ENCODE measurements at regions of chr5 and their contacts with region 1.

Region 1: DNA sequence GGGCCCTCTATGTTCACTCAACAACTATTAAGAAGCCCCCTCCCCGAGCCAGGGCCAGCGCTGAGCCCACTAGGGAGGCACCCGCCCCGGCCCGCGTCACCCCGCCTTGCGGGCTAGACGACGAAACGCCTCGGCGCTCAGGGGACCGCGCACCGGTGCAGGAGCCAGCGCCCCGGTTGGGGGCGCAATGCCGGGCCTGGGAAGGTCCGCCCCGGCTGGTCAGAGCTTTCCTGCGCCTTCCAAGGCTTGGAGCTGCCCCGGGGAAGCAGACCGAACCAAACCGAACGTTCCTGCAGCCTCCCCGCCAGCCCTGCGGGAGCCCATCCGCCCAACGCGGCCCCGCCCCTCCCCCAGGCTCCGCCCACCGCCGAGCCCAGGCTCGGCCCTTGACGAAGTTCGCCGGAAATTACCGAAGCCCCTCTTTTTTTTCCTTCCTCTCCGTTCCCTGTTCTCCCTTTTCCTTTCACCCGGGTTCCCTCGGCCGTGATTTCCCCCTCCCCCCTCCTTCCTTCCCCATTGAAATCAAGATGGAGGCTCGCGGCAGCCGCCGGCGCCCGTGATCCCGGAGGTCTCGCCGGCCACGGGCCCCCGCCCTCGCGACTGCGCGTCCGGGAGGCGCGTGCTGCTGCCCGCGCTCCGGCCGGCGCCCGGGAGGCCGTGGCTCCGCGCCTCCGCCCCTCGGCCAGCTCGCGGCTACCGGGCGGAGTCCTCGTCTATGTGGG is at the start of gene TRIO:
- DNase-seq: peak; percentile 96
- H3K4me3 ChIP-seq: peak within 1 kb of the TSS; percentile 61 to 93 (median 90)
- H3K27ac ChIP-seq: peak within 1 kb of the TSS; percentile 91 to 99 (median 98)
- H3K4me1 ChIP-seq: peaks cover 0 to 41% (median 29%) of the 10 kb centered on the region in 4 donors
- H3K27me3 ChIP-seq: no peaks in the 10 kb centered on the region
- CTCF ChIP-seq: peak in 3 of 4 experiments; percentile 34 to 55 (median 35)
- EP300 ChIP-seq: no peak
- POLR2A ChIP-seq: peak; percentile 21 to 28
- total RNA-seq, gene TRIO: 119 to 300 (median 181) TPM

Region 2: DNA sequence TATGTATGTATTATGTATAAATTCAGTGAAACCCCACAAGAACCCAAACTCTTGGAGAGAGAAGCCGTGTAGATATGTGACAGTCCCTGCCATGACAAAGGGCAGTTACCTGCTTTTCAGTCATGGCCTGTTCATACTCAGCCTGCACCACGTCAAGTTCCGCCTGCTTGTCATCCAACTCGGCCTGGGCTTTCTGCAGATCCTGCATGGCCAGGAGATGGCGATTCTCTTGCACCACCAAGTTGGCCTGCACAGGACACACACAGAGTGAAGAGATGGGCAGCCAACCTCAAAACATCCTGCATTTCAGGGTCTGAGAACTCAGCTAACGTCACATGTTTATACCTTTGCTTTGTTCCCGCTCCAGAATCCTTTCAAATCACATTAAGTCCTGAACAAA is 384.3 kb before region 1 on chr5:
- intact Hi-C with region 1: no loop called
- DNase-seq: no peak
- H3K4me3 ChIP-seq: no peak overlapping the region
- H3K27ac ChIP-seq: no peak overlapping the region
- H3K4me1 ChIP-seq: no peaks in the 10 kb centered on the region
- H3K27me3 ChIP-seq: no peaks in the 10 kb centered on the region
- CTCF ChIP-seq: no peak
- EP300 ChIP-seq: no peak
- POLR2A ChIP-seq: no peak

Region 3: DNA sequence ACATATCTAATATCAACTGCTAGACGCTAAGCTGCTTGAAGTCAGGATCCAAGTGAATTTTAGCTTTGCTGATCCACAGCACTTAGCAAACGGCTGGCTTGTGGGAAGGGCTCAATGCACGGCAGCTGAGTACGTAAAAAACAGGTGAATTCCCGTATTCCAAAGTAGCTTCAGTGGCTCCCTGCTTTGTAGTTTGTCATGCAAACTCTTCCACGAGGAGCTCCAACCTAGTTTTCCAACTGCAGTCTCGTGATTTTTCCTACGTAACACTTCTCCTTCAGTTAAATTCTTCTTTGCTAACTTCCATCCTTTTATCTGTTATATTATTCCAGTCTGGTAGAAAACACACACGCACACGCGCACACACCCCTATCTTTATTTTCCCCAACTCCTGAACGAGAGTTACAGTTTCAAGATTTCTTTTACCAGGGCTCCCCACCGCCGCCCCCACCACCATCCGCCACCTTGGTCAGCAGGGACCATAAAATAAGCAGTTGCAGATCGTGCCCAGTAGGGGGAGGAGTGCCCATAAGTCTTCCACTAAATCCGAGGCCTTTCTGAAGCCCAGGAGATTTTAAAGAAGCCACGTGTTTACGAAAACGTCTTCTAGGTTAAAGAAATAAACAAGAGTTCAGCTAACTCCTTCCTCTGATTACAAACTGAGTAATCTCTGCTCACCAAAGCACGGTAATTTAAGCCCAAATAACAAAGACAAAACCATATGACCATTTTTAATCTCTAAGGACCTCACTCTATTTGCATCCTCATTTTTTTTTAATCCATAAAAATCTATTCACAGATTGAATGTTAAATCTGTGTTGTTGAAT is 34.6 kb before region 1 on chr5:
- intact Hi-C with region 1: loop called (anchors 2 kb)
- DNase-seq: peak; percentile 86
- H3K4me3 ChIP-seq: peak overlapping the region in 3 of 4 donors; percentile 25 to 35 (median 30)
- H3K27ac ChIP-seq: peak overlapping the region in 2 of 4 donors; percentile 4 to 38
- H3K4me1 ChIP-seq: peaks cover 0 to 7% (median 2%) of the 10 kb centered on the region in 4 donors
- H3K27me3 ChIP-seq: no peaks in the 10 kb centered on the region
- CTCF ChIP-seq: peak; percentile 37 to 82 (median 60)
- EP300 ChIP-seq: no peak
- POLR2A ChIP-seq: no peak

Region 4: GRCh38 chr5:14185326-14186058 is 42.5 kb after region 1 on chr5:
- intact Hi-C with region 1: loop called (anchors 2 kb)
- DNase-seq: no peak
- H3K4me3 ChIP-seq: no peak overlapping the region
- H3K27ac ChIP-seq: peak overlapping the region; percentile 86 to 95 (median 92)
- H3K4me1 ChIP-seq: peaks cover 0 to 97% (median 88%) of the 10 kb centered on the region in 4 donors
- H3K27me3 ChIP-seq: no peaks in the 10 kb centered on the region
- CTCF ChIP-seq: no peak
- EP300 ChIP-seq: no peak
- POLR2A ChIP-seq: no peak

Region 5: GRCh38 chr5:14208071-14209021 is 65.4 kb after region 1 on chr5:
- intact Hi-C with region 1: loop called (anchors 2 kb)
- DNase-seq: no peak
- H3K4me3 ChIP-seq: no peak overlapping the region
- H3K27ac ChIP-seq: peak overlapping the region; percentile 71 to 77 (median 75)
- H3K4me1 ChIP-seq: peaks cover 0 to 95% (median 83%) of the 10 kb centered on the region in 4 donors
- H3K27me3 ChIP-seq: no peaks in the 10 kb centered on the region
- CTCF ChIP-seq: no peak
- EP300 ChIP-seq: no peak
- POLR2A ChIP-seq: no peak

Region 6: GRCh38 chr5:14270209-14270702 is 127.3 kb after region 1 on chr5:
- intact Hi-C with region 1: loop called (anchors 1 kb)
- DNase-seq: no peak
- H3K4me3 ChIP-seq: no peak overlapping the region
- H3K27ac ChIP-seq: peak overlapping the region; percentile 58 to 82 (median 70)
- H3K4me1 ChIP-seq: peaks cover 0 to 72% (median 63%) of the 10 kb centered on the region in 4 donors
- H3K27me3 ChIP-seq: no peaks in the 10 kb centered on the region
- CTCF ChIP-seq: peak; percentile 67 to 87 (median 78)
- EP300 ChIP-seq: no peak
- POLR2A ChIP-seq: no peak

Region 7: DNA sequence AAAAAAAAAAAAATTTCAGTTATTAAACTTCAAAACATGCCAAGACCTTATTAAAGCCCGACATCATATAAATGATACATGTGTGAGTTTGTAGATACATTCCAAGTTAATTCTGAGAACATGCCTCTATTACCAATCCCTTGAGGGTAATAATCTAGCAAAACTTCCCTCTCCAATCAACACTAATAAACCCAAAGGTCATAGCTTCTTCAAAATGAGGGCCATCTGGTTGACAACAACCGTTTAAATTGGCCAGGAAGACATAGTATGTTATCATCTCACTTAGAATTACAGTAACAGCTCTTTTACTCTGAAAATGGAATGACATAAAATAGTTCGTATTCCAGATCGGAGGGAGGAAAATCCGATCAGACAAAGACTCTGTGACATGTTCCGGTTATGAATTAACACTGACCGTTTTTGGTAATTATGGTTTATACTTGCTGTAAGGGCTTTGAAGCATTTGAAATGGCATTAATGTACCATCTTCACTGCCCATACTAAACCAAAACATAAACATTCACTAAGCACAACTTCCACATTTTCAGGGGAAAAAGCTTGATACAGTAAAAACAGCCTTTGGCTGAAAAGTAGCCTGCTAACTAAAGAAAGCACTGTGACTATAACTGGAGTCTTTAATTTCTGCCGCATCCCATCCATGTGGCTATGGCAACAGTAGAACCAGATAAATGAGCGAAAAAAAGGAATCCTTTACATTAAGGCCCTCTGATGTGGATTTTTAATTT is 678.3 kb after region 1 on chr5:
- intact Hi-C with region 1: no loop called
- DNase-seq: no peak
- H3K4me3 ChIP-seq: no peak overlapping the region
- H3K27ac ChIP-seq: no peak overlapping the region
- H3K4me1 ChIP-seq: no peaks in the 10 kb centered on the region
- H3K27me3 ChIP-seq: no peaks in the 10 kb centered on the region
- CTCF ChIP-seq: no peak
- EP300 ChIP-seq: no peak
- POLR2A ChIP-seq: no peak